ENCODE measurements at regions of chr10 and their contacts with region 1.

Region 1: GRCh38 chr10:29304264-29305030 is 15.6 kb downstream of the LYZL1 start:
- DNase-seq: peak; percentile 74
- ATAC-seq: peak; percentile 62
- H3K4me3 ChIP-seq: no peak overlapping the region
- H3K27ac ChIP-seq: no peak overlapping the region
- H3K4me1 ChIP-seq: peaks cover 4% of the 10 kb centered on the region; the same call in 1 of the 2 replicates
- H3K27me3 ChIP-seq: no peaks in the 10 kb centered on the region
- CTCF ChIP-seq: peak; percentile 84

Region 2: GRCh38 chr10:28628184-28628893 is 676.1 kb before region 1 on chr10:
- CTCF ChIA-PET with region 1: no interaction called
- POLR2A ChIA-PET with region 1: no interaction called
- intact Hi-C with region 1: loop called (anchors 1 kb)
- DNase-seq: peak; percentile 76
- ATAC-seq: peak; percentile 86
- H3K4me3 ChIP-seq: no peak overlapping the region
- H3K27ac ChIP-seq: no peak overlapping the region
- H3K4me1 ChIP-seq: peaks cover 15% of the 10 kb centered on the region
- H3K27me3 ChIP-seq: no peaks in the 10 kb centered on the region
- CTCF ChIP-seq: peak; percentile 90

Region 3: DNA sequence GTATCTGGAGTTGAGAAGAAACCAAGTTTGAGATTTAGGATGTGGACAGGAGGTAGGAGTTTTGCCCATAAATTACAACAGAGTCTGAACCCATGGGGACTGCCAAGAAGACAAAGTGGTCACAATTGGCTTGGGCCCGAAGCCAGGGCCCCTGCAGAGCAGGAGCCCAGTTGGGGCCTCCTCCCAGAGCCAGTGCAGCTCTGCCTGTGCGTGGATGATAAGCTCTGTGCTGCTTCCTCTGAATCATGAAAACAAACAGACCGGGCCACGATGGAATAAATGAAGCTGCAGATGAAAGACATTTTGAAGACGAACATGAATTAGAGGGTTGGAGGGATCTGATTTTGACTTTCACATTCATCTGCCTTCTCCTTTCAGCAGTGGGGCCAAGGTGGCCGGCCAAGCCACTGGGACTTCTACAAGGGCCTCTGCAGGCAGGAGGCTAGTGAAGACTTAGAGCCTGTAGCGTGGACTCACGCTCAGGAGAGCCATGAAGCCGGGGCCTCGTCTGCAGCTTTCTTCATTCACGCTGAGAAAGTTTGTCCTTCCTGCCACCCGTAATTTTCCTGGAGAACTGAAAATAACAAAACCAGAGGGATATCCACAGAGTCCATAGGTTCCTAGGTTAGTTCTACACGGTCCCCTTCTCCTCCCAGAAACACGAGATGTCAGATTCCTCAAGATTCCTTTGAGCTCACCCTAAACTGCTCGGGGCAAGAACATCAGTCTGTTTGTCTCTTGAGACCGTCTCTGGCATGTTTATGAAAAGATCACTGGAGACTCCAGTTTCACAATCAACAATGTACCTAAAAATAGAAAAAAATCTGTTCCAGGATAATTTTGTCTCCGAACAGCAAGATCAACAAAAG is 172.3 kb before region 1 on chr10:
- CTCF ChIA-PET with region 1: interaction called, 3 read pairs
- POLR2A ChIA-PET with region 1: no interaction called
- intact Hi-C with region 1: loop called (anchors 2 kb)
- DNase-seq: peak; percentile 56
- ATAC-seq: peak; percentile 85
- H3K4me3 ChIP-seq: no peak overlapping the region
- H3K27ac ChIP-seq: peak overlapping the region; percentile 46
- H3K4me1 ChIP-seq: peaks cover 12% of the 10 kb centered on the region
- H3K27me3 ChIP-seq: no peaks in the 10 kb centered on the region
- CTCF ChIP-seq: no peak

Region 4: GRCh38 chr10:29239569-29240472 is 64.6 kb before region 1 on chr10:
- CTCF ChIA-PET with region 1: interaction called, 8 read pairs
- POLR2A ChIA-PET with region 1: no interaction called
- intact Hi-C with region 1: loop called (anchors 1 kb)
- DNase-seq: peak; percentile 62
- ATAC-seq: peak; percentile 79
- H3K4me3 ChIP-seq: no peak overlapping the region
- H3K27ac ChIP-seq: no peak overlapping the region
- H3K4me1 ChIP-seq: no peaks in the 10 kb centered on the region
- H3K27me3 ChIP-seq: no peaks in the 10 kb centered on the region
- CTCF ChIP-seq: peak; percentile 80

Measured in PC-3 (cell line).